ENCODE measurements at regions of chr6 and their contacts with region 1.

Region 1: DNA sequence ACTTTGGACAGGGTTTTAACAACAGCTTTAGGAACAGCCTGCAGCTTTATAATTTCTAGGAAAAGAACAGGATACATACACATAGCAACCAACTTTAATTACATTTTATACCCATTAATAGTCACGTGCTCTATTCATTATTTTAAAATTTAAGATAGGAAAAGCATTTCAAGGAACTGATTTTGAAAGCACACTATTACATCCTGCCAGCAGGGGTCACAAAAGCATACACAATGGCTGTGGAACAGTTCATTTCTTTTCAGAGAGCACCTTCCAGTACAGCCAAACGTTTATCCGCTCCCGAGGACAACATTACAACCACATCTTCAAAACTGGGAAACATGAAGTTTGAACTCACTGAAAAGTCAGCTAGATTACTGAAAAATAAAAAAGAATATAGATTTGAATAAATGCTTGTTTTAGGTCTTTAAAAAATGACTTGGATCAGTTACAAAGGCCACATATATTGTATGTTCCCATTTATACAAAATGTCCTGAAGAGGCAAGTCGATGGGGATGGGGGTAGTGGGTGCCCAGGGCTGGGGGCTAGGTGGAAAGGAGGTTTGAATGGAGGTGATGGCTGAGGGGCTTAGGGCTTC is 104.6 kb upstream of the EXOC2 start:
- DNase-seq: no peak
- ATAC-seq: peak; percentile 68 to 82 (median 73)
- H3K4me3 ChIP-seq: no peak overlapping the region
- H3K27ac ChIP-seq: no peak overlapping the region
- H3K4me1 ChIP-seq: no peaks in the 10 kb centered on the region
- H3K27me3 ChIP-seq: peaks cover 2 to 12% (median 3%) of the 10 kb centered on the region in 3 donors
- CTCF ChIP-seq: peak; percentile 84

Region 2: DNA sequence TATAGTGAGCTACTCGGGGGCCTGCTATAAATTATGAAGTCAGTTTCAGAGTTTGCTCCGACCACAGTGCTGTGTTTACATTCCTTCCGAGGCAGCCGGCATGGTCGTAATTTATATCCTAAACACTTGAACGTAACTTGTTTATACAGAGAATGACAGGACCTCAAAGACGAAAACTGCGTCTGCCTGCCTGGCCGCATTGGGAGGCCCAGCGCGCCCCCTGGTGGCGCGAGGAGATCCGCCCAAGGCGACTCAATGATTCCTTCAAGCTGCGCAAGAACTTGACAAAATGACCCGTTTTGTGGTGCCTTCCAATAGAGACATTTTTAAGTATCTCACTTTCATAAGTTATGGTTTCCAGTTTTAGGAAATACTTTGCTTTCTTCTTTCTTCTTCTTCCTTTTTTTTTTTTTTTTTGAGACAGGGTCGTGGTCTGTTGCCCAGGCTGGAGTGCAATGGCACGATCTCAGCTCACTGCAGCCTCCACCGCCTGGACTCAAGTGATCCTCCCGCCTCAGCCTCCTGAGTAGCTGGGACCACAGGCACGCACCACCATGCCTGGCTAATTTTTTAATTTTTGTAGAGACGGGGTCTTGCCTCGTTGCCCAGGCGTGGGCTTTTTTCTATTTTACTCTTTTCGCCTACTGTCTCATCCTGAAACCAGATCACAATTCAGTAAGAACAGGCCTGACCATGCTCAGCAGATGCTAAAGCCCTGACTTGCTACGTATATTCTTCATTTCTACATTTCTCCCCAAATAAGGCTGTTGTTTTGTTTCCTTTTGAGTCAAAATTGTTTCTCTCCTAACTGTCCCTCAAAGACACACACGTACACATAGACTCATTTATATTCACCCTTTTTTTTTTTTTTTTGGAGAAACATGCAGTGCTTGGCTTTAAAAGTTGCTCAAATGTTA is 599.6 kb after region 1 on chr6:
- intact Hi-C with region 1: loop called in 1 of 2 experiments (anchors 5 kb)
- DNase-seq: peak; percentile 73 to 77
- ATAC-seq: peak in 3 of 4 donors; percentile 66 to 88 (median 72)
- H3K4me3 ChIP-seq: no peak overlapping the region
- H3K27ac ChIP-seq: no peak overlapping the region
- H3K4me1 ChIP-seq: no peaks in the 10 kb centered on the region
- H3K27me3 ChIP-seq: peaks cover 0 to 89% (median 30%) of the 10 kb centered on the region in 3 donors
- CTCF ChIP-seq: peak; percentile 92

Region 3: DNA sequence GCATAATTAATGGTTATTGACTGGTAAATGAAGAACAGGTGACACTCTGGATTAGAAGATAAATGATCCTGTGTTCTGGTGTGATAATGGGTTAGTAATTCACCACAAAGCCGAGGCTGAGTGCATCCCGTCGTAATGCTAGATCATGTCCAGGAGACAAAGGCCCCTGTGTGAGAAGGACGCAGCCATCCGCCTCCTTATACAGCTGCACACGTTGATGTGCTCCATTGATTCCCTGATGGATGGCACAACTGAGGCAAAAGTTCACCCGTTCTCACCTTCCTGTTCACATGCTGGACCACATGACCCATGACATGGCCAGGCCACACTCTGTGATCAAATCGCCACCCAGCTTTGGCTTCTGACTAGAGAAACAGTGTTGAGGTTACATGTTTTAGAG is 948.2 kb after region 1 on chr6:
- intact Hi-C with region 1: no loop called
- DNase-seq: no peak
- ATAC-seq: no peak
- H3K4me3 ChIP-seq: no peak overlapping the region
- H3K27ac ChIP-seq: no peak overlapping the region
- H3K4me1 ChIP-seq: no peaks in the 10 kb centered on the region
- H3K27me3 ChIP-seq: no peaks in the 10 kb centered on the region
- CTCF ChIP-seq: no peak

Measured in psoas muscle (tissue), 8 donors.